Caco-2 (cell line): ENCODE measurements at regions of chr3 and their contacts with region 1.

Region 1: GRCh38 chr3:115986555-115987207 is 363.4 kb downstream of the GAP43 start:
- DNase-seq: peak; percentile 45 to 55
- H3K4me3 ChIP-seq: no peak overlapping the region
- H3K4me3 Mint-ChIP-seq: no peak overlapping the region
- H3K27ac Mint-ChIP-seq: no peak overlapping the region
- H3K4me1 ChIP-seq: no peaks in the 10 kb centered on the region
- H3K4me1 Mint-ChIP-seq: no peaks in the 10 kb centered on the region
- H3K27me3 ChIP-seq: no peaks in the 10 kb centered on the region
- H3K27me3 Mint-ChIP-seq: peaks cover 16% of the 10 kb centered on the region
- CTCF ChIP-seq: peak; percentile 64 to 65

Region 2: DNA sequence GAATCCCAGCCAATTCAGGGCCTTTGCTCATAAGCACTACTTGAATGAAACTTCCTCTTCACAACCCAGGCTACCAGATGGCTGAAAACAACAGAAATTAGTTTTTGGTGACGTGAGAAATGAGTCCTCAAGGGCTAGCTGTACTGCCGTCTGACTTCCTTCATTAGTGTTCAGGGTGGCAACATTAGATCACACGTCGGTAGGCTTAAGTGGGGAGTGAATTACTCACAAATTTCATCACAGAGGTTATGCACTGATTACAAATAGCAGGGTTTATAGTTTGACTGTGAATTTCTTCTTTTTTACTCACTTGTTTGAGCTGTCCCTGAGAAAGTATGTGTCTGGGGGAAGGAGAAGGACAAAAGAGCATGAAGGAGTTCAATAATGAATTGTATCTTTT is 33.8 kb after region 1 on chr3:
- CTCF ChIA-PET with region 1: no interaction called
- POLR2A ChIA-PET with region 1: no interaction called
- intact Hi-C with region 1: loop called (anchors 2 kb)
- DNase-seq: no peak
- H3K4me3 ChIP-seq: no peak overlapping the region
- H3K4me3 Mint-ChIP-seq: no peak overlapping the region
- H3K27ac Mint-ChIP-seq: no peak overlapping the region
- H3K4me1 ChIP-seq: 0 out of 2 replicates have a peak, but pooled peaks cover 3% of the 10 kb centered on the region
- H3K4me1 Mint-ChIP-seq: peaks cover 7% of the 10 kb centered on the region
- H3K27me3 ChIP-seq: no peaks in the 10 kb centered on the region
- H3K27me3 Mint-ChIP-seq: peaks cover 3% of the 10 kb centered on the region
- CTCF ChIP-seq: no peak

Region 3: DNA sequence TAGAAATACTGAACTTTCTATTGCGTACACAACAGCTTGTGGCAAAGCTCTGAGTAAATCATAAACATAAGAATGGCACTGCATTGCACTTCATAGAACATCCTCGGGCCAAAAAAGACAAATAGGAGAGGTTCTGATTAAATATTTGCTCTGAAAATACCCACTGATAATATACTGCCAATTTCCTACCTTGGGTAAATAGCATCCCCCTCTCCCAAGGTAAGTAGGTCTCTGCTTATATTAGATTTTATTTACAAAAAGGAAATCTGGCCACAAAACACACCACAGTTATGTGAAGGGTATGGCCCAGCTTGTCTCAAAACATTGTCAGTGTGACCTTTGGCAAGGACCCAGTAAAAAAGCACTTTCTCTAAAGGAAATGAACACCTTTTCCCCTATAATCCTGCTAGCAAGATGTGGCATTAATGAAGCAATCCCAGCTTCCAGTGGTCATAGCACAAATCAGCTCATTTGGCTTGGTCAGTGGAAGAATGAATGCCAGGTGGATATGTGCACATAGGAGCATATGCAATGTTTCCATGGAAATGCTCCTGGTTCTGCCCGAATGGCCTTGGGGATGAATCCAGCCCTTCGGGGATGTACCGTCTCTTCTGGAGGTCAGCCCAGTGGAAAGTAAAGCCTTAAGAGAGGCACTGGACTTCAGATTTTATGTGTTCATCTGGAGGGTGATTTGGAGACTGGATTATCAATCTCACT is 142.7 kb after region 1 on chr3:
- CTCF ChIA-PET with region 1: no interaction called
- POLR2A ChIA-PET with region 1: no interaction called
- intact Hi-C with region 1: loop called (anchors 10 kb)
- DNase-seq: no peak
- H3K4me3 ChIP-seq: no peak overlapping the region
- H3K4me3 Mint-ChIP-seq: no peak overlapping the region
- H3K27ac Mint-ChIP-seq: no peak overlapping the region
- H3K4me1 ChIP-seq: no peaks in the 10 kb centered on the region
- H3K4me1 Mint-ChIP-seq: no peaks in the 10 kb centered on the region
- H3K27me3 ChIP-seq: no peaks in the 10 kb centered on the region
- H3K27me3 Mint-ChIP-seq: no peaks in the 10 kb centered on the region
- CTCF ChIP-seq: no peak

Region 4: DNA sequence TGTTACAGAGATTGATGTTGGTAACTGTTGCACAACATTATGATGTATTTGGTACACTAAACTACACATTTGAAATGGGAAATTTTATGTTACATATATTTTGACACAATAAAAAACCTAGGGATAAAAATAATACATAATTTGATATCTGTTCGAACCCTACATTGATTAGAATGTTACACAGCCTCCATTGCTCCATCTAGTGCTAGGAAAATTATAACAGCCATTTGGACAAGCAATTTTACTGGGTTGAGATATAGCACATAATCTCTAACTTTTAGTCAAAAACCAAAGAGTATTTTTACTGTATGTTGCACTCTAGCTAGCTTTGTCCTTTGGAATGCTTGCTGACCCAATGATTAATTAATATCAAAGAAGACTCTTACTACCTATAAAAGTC is 350.5 kb after region 1 on chr3:
- CTCF ChIA-PET with region 1: no interaction called
- POLR2A ChIA-PET with region 1: no interaction called
- intact Hi-C with region 1: loop called (anchors 2 kb)
- DNase-seq: no peak
- H3K4me3 ChIP-seq: no peak overlapping the region
- H3K4me3 Mint-ChIP-seq: no peak overlapping the region
- H3K27ac Mint-ChIP-seq: no peak overlapping the region
- H3K4me1 ChIP-seq: no peaks in the 10 kb centered on the region
- H3K4me1 Mint-ChIP-seq: no peaks in the 10 kb centered on the region
- H3K27me3 ChIP-seq: no peaks in the 10 kb centered on the region
- H3K27me3 Mint-ChIP-seq: no peaks in the 10 kb centered on the region
- CTCF ChIP-seq: no peak